Activated naive CD4-positive, alpha-beta T cell treated with anti-CD3 and anti-CD28 coated beads for 36 hours (primary cell): ENCODE measurements at regions of chrX and their contacts with region 1.

Region 1: DNA sequence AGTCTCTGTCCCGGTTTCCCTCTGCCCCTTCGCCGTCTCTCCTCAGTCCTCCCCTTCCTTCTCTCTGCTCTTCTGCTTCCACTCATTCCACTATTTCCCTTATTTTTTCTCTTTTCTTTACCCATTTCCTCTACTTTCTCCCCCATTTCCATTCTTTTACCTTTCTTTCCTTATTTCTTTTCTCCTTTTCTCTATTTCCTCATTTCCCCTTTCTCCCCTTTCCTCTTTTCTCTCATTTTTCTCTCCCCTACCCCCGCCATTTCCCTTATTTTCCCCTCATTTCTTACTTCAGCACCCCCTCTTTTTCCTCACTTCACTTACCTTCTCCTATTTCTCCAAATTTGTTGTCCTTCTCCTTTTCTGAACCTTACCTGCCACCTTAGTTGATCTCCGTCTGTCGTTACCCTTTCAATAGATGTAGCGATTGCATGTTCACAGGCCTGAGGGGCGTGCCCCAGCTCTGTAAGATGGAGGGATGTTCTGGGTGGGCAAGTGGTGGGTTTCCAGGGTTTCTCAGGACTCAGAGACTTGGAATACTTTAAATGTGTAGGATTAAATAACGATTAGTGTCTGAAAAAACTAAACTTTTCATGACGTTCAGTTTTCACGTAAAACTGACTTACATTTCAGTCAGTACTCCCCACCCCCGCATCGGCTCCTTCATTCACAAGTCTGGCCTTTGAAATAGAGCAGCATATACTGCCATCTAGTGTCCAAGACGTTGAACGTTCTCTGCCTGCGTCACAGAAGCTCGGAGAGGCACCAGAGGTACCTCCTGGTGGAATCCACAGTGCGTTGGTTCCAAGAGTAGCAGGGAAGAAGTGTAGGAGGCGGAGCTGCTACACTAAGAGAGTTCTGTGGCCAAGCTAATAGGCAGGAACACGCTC is 641 bp upstream of the NCBP2L start:
- DNase-seq: peak; percentile 85
- H3K4me3 Mint-ChIP-seq: peak overlapping the region; percentile 85
- H3K27ac Mint-ChIP-seq: peak overlapping the region; percentile 68
- H3K4me1 Mint-ChIP-seq: peaks cover 4% of the 10 kb centered on the region
- H3K27me3 Mint-ChIP-seq: no peaks in the 10 kb centered on the region

Region 2: DNA sequence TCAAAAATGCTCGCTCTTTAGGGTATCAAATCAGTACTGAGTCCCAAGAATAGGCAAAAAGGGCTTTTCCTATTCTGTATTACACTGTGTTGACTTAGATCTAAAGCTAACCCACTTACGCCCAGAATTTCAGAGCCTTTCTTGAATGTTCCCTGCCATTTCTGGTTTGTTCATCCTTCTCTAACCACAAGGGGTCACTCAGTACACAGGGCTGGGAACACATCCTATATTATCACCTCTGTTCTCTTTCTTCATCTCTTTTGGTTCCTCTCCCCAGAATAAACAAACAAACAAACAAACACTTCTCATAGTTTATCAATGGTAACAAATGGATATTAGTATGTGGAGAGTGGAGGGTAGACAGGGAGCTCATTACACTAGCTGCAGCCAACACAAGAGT is 751.3 kb before region 1 on chrX:
- CTCF ChIA-PET with region 1: no interaction called
- intact Hi-C with region 1: loop called (anchors 2 kb)
- DNase-seq: no peak
- H3K4me3 Mint-ChIP-seq: no peak overlapping the region
- H3K27ac Mint-ChIP-seq: no peak overlapping the region
- H3K4me1 Mint-ChIP-seq: no peaks in the 10 kb centered on the region
- H3K27me3 Mint-ChIP-seq: no peaks in the 10 kb centered on the region

Region 3: GRCh38 chrX:107537815-107538214 is 239.1 kb before region 1 on chrX:
- CTCF ChIA-PET with region 1: interaction called, 5 read pairs
- intact Hi-C with region 1: loop called (anchors 1 kb)
- DNase-seq: peak; percentile 68
- H3K4me3 Mint-ChIP-seq: no peak overlapping the region
- H3K27ac Mint-ChIP-seq: no peak overlapping the region
- H3K4me1 Mint-ChIP-seq: no peaks in the 10 kb centered on the region
- H3K27me3 Mint-ChIP-seq: peaks cover 3% of the 10 kb centered on the region

Region 4: GRCh38 chrX:107672955-107673378 is 103.9 kb before region 1 on chrX:
- CTCF ChIA-PET with region 1: interaction called, 46 read pairs
- intact Hi-C with region 1: loop called (anchors 1 kb)
- DNase-seq: peak; percentile 81
- H3K4me3 Mint-ChIP-seq: peak overlapping the region; percentile 22
- H3K27ac Mint-ChIP-seq: peak overlapping the region; percentile 74
- H3K4me1 Mint-ChIP-seq: peaks cover 50% of the 10 kb centered on the region
- H3K27me3 Mint-ChIP-seq: no peaks in the 10 kb centered on the region

Region 5: GRCh38 chrX:107741404-107741790 is 35.5 kb before region 1 on chrX:
- CTCF ChIA-PET with region 1: interaction called, 8 read pairs
- intact Hi-C with region 1: loop called (anchors 1 kb)
- DNase-seq: no peak
- H3K4me3 Mint-ChIP-seq: peak overlapping the region; percentile 77
- H3K27ac Mint-ChIP-seq: peak overlapping the region; percentile 94
- H3K4me1 Mint-ChIP-seq: peaks cover 40% of the 10 kb centered on the region
- H3K27me3 Mint-ChIP-seq: no peaks in the 10 kb centered on the region

Region 6: DNA sequence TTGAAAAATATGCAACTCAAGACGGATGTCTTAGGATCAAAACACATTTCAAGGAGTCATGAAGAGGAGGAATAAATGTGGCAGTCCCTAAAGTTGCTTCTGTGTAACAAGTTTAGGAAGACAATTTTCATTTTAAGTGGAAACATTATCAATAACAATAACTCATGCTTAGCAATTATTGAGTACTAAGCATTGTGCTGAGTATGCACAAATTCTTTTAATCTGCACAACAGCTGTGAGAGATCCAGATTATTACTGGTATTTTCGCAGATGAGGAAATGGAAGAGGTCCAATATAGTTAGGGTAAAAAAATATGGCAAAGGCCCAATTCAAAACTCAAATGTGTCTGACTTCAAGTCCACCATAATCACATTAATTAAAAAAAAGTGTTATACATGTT is 208.1 kb after region 1 on chrX:
- CTCF ChIA-PET with region 1: no interaction called
- intact Hi-C with region 1: no loop called
- DNase-seq: no peak
- H3K4me3 Mint-ChIP-seq: no peak overlapping the region
- H3K27ac Mint-ChIP-seq: no peak overlapping the region
- H3K4me1 Mint-ChIP-seq: peaks cover 3% of the 10 kb centered on the region
- H3K27me3 Mint-ChIP-seq: no peaks in the 10 kb centered on the region

Region 7: GRCh38 chrX:108001174-108001814 is 224.4 kb after region 1 on chrX:
- CTCF ChIA-PET with region 1: no interaction called
- intact Hi-C with region 1: loop called (anchors 2 kb)
- DNase-seq: peak; percentile 37
- H3K4me3 Mint-ChIP-seq: no peak overlapping the region
- H3K27ac Mint-ChIP-seq: peak overlapping the region; percentile 30
- H3K4me1 Mint-ChIP-seq: peaks cover 5% of the 10 kb centered on the region
- H3K27me3 Mint-ChIP-seq: no peaks in the 10 kb centered on the region